PC-3 (cell line): ENCODE measurements at regions of chr12 and their contacts with region 1.

Region 1: DNA sequence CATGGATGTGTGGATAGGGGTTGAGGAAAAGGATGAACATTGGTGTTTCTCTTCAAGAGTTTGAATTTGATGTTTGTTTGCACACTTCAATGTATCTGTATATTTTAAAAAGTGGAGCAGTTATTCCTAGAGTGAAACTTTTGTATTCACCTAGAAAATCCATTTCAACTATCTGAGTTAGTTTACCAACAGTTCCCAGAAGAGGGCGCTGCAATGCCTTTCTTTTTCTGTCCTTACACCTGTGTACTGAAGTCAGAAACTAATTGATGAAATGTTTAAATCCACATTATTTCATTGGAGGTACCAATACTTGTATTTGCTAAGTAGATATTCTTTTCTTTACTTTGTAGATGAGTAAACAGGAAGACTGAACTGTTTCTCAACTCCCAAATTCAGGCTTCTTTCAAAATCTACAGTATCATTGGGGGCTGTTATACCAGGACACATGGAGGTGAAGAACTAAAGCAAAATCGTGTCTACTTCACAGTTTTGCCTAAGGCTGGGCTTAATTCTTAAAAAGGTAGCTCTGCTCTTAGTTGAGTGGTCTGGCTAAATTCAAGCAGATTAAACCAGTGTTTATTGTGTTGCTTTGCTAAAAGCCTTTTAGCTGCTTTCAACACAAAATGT is 26.6 kb upstream of the KLRB1 start:
- DNase-seq: peak; percentile 77
- ATAC-seq: peak; percentile 46
- H3K4me3 ChIP-seq: no peak overlapping the region
- H3K27ac ChIP-seq: no peak overlapping the region
- H3K4me1 ChIP-seq: peaks cover 8% of the 10 kb centered on the region; the same call in 1 of the 2 replicates
- H3K27me3 ChIP-seq: no peaks in the 10 kb centered on the region
- CTCF ChIP-seq: peak; percentile 84

Region 2: DNA sequence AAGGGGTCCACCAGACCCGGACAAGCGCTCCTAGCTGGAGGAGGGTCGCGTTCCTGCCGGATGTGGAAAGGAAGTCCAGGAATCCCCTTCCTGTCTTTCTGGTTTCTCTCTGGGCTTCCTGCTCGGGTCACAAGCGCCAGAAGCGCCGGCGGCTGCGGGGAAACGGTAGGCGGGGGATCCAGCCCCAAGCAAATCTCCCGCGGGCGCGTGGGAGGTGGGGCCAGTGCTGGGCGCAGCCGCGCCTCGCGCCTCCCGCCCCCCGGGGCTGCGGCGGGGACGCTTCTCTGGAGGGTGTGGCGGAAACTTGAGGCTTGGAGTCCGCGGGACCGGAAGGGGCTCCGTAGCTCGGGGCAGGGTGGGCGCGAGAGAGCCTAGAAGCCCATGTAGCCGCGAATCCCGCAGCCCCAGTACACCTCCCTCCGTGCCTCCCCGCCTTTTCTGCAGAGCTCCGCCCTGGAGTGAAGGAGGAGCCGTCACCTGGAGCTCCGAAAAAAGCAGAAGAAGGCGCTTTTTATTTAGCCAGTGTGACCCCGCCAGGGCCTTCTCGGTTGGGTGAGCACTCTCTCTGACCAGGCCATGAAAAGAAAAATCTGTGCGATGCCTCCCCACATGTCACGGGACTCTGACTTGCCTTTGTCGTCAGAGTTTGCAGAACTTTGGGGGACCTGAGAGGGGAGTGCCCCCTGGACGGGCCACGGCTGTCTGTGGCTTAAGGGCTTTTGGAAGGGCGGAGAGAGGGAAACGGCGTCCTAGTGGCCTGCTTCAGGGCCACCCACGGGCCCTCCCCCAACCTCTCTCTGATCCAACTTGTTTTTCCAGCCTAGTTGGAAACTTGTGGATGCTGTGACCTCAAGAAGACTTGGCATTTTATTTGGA is 13.8 kb after region 1 on chr12:
- CTCF ChIA-PET with region 1: no interaction called
- POLR2A ChIA-PET with region 1: interaction called, 3 read pairs
- intact Hi-C with region 1: loop called (anchors 2 kb)
- DNase-seq: peak; percentile 81
- ATAC-seq: peak; percentile 69
- H3K4me3 ChIP-seq: peak overlapping the region; percentile 77
- H3K27ac ChIP-seq: peak overlapping the region; percentile 87
- H3K4me1 ChIP-seq: peaks cover 28% of the 10 kb centered on the region
- H3K27me3 ChIP-seq: no peaks in the 10 kb centered on the region
- CTCF ChIP-seq: no peak

Region 3: DNA sequence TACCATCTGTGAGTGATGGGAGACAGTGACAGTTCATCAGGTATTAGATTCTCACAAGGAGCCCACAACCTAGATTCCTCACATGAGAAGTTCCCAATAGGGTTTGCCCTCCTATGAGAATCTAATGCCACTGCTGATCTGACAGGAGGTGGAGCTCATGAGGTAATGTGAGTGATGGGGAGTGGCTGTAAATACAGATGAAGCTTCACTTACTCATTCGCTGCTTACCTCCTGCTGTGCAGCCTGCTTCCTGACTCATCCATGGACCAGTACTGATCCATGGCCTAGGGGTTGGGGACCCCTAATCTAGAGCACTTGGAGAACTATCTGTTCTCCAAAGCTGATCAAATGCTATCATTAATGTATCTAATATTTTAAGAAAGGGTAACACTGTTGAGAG is 52.9 kb after region 1 on chr12:
- CTCF ChIA-PET with region 1: no interaction called
- POLR2A ChIA-PET with region 1: no interaction called
- intact Hi-C with region 1: no loop called
- DNase-seq: peak; percentile 69
- ATAC-seq: peak; percentile 83; the same call in 1 of the 2 replicates
- H3K4me3 ChIP-seq: no peak overlapping the region
- H3K27ac ChIP-seq: no peak overlapping the region
- H3K4me1 ChIP-seq: peaks cover 6% of the 10 kb centered on the region; the same call in 1 of the 2 replicates
- H3K27me3 ChIP-seq: no peaks in the 10 kb centered on the region
- CTCF ChIP-seq: no peak

Region 4: GRCh38 chr12:9707864-9708808 is 73.8 kb after region 1 on chr12:
- CTCF ChIA-PET with region 1: no interaction called
- POLR2A ChIA-PET with region 1: no interaction called
- intact Hi-C with region 1: loop called (anchors 1 kb)
- DNase-seq: peak; percentile 61
- ATAC-seq: peak; percentile 66
- H3K4me3 ChIP-seq: no peak overlapping the region
- H3K27ac ChIP-seq: no peak overlapping the region
- H3K4me1 ChIP-seq: peaks cover 12% of the 10 kb centered on the region
- H3K27me3 ChIP-seq: no peaks in the 10 kb centered on the region
- CTCF ChIP-seq: peak; percentile 77

Region 5: GRCh38 chr12:9797722-9798619 is 163.7 kb after region 1 on chr12:
- CTCF ChIA-PET with region 1: no interaction called
- POLR2A ChIA-PET with region 1: no interaction called
- intact Hi-C with region 1: loop called (anchors 2 kb)
- DNase-seq: peak; percentile 78
- ATAC-seq: peak; percentile 94
- H3K4me3 ChIP-seq: no peak overlapping the region
- H3K27ac ChIP-seq: no peak overlapping the region
- H3K4me1 ChIP-seq: peaks cover 31% of the 10 kb centered on the region
- H3K27me3 ChIP-seq: no peaks in the 10 kb centered on the region
- CTCF ChIP-seq: peak; percentile 70

Region 6: GRCh38 chr12:9906873-9907272 is 272.6 kb after region 1 on chr12:
- CTCF ChIA-PET with region 1: no interaction called
- POLR2A ChIA-PET with region 1: no interaction called
- intact Hi-C with region 1: no loop called
- DNase-seq: no peak
- ATAC-seq: no peak
- H3K4me3 ChIP-seq: no peak overlapping the region
- H3K27ac ChIP-seq: no peak overlapping the region
- H3K4me1 ChIP-seq: no peaks in the 10 kb centered on the region
- H3K27me3 ChIP-seq: peaks cover 15% of the 10 kb centered on the region; the same call in 1 of the 2 replicates
- CTCF ChIP-seq: no peak